ENCODE measurements at regions of chr5 and their contacts with region 1.

Region 1: DNA sequence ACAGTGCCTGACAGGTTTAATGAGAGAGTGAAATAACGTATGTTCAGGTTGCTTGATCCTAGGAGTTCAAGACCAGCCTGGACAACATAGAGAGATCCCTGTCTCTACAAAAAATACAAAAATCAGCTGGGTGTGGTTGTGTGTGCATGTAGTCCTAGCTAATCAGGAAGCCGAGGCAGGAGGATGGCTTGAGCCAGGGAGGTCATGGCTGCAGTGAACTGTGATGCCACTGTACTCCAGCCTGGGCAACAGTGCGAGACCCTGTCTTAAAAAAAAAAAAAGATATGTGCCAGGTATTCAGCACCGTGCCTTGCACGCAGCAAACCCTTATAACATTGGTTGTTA is 38.8 kb upstream of the SPRY4 start:
- DNase-seq: no peak
- ATAC-seq: no peak

Region 2: GRCh38 chr5:142426129-142427014 is 62.8 kb after region 1 on chr5:
- intact Hi-C with region 1: loop called (anchors 2 kb)
- DNase-seq: peak; percentile 83
- ATAC-seq: peak; percentile 65